PC-9 (cell line): ENCODE measurements at regions of chr4 and their contacts with region 1.

Region 1: GRCh38 chr4:48016141-48017103 is at the starts of genes CNGA1 and NIPAL1:
- DNase-seq: peak; percentile 83 to 93
- H3K4me3 ChIP-seq: peak within 1 kb of the TSS; percentile 98
- H3K27ac ChIP-seq: peak within 1 kb of the TSS; percentile 93
- H3K4me1 ChIP-seq: peaks cover 32% of the 10 kb centered on the region
- H3K27me3 ChIP-seq: no peaks in the 10 kb centered on the region
- CTCF ChIP-seq: peak; percentile 52; the same call in 1 of the 2 replicates
- total RNA-seq, gene CNGA1: 1.4 and 1.8 TPM in 2 replicates
- total RNA-seq, gene NIPAL1: 7.0 and 8.2 TPM in 2 replicates

Region 2: GRCh38 chr4:48042979-48043461 is 26.6 kb after region 1 on chr4:
- CTCF ChIA-PET with region 1: interaction called, 3 read pairs
- POLR2A ChIA-PET with region 1: interaction called, 14 read pairs
- intact Hi-C with region 1: no loop called
- DNase-seq: no peak
- H3K4me3 ChIP-seq: no peak overlapping the region
- H3K27ac ChIP-seq: no peak overlapping the region
- H3K4me1 ChIP-seq: 0 out of 2 replicates have a peak, but pooled peaks cover 4% of the 10 kb centered on the region
- H3K27me3 ChIP-seq: no peaks in the 10 kb centered on the region
- CTCF ChIP-seq: no peak

Region 3: DNA sequence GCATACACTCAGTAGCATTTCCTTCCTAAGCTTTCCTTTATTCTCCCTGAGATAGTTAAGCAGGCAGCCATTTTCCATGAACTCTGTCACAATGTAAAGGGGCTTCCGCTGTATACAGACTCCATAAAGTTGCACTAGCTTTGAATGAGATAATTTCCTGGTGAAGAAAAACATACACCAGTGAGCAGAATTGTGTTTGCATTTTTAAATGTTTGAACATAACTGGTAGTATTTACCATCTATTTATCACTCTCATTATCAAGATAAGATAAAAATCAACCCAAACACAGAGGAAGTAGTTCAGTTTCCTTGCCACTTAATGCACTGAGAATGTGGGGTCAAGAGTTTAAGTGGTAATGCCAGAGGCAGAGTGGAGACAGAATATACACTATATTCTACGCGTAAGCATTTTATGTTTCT is 63.6 kb after region 1 on chr4:
- CTCF ChIA-PET with region 1: no interaction called
- POLR2A ChIA-PET with region 1: no interaction called
- intact Hi-C with region 1: loop called (anchors 1 kb)
- DNase-seq: peak; percentile 23 to 96
- H3K4me3 ChIP-seq: peak overlapping the region; percentile 43; the same call in 1 of the 2 replicates
- H3K27ac ChIP-seq: peak overlapping the region; percentile 86
- H3K4me1 ChIP-seq: peaks cover 58% of the 10 kb centered on the region
- H3K27me3 ChIP-seq: no peaks in the 10 kb centered on the region
- CTCF ChIP-seq: no peak

Region 4: GRCh38 chr4:48093949-48094550 is 77.6 kb after region 1 on chr4:
- CTCF ChIA-PET with region 1: interaction called, 12 read pairs
- POLR2A ChIA-PET with region 1: no interaction called
- intact Hi-C with region 1: no loop called
- DNase-seq: peak; percentile 74 to 86
- H3K4me3 ChIP-seq: no peak overlapping the region
- H3K27ac ChIP-seq: peak overlapping the region; percentile 62
- H3K4me1 ChIP-seq: peaks cover 18% of the 10 kb centered on the region
- H3K27me3 ChIP-seq: no peaks in the 10 kb centered on the region
- CTCF ChIP-seq: no peak

Region 5: DNA sequence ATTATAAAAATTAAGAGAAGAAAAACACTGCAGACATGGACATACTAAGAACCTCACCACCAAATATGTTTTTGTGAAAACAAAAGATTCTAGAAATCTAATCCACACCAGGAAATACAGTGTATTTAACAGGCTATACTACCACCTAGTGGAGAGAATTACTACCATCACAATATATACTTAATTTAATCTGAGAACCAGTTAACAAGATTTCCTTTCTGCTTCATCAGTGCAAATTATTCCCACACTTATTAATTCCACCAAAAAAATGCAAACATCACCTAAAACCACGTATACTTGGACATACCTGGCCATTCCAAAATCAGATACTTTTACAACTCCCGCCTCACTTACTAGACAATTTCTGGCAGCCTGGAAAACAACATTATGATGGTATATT is 124.6 kb after region 1 on chr4:
- CTCF ChIA-PET with region 1: no interaction called
- POLR2A ChIA-PET with region 1: no interaction called
- intact Hi-C with region 1: loop called (anchors 5 kb)
- DNase-seq: peak in 1 of 2 experiments; percentile 48
- H3K4me3 ChIP-seq: no peak overlapping the region
- H3K27ac ChIP-seq: no peak overlapping the region
- H3K4me1 ChIP-seq: peaks cover 6% of the 10 kb centered on the region; the same call in 1 of the 2 replicates
- H3K27me3 ChIP-seq: no peaks in the 10 kb centered on the region
- CTCF ChIP-seq: peak; percentile 76

Region 6: GRCh38 chr4:48275247-48275646 is 258.8 kb after region 1 on chr4:
- CTCF ChIA-PET with region 1: no interaction called
- POLR2A ChIA-PET with region 1: no interaction called
- intact Hi-C with region 1: loop called (anchors 10 kb)
- DNase-seq: no peak
- H3K4me3 ChIP-seq: no peak overlapping the region
- H3K27ac ChIP-seq: no peak overlapping the region
- H3K4me1 ChIP-seq: peaks cover 7% of the 10 kb centered on the region; the same call in 1 of the 2 replicates
- H3K27me3 ChIP-seq: no peaks in the 10 kb centered on the region
- CTCF ChIP-seq: peak; percentile 59